ENCODE measurements at regions of chr14 and their contacts with region 1.

Region 1: DNA sequence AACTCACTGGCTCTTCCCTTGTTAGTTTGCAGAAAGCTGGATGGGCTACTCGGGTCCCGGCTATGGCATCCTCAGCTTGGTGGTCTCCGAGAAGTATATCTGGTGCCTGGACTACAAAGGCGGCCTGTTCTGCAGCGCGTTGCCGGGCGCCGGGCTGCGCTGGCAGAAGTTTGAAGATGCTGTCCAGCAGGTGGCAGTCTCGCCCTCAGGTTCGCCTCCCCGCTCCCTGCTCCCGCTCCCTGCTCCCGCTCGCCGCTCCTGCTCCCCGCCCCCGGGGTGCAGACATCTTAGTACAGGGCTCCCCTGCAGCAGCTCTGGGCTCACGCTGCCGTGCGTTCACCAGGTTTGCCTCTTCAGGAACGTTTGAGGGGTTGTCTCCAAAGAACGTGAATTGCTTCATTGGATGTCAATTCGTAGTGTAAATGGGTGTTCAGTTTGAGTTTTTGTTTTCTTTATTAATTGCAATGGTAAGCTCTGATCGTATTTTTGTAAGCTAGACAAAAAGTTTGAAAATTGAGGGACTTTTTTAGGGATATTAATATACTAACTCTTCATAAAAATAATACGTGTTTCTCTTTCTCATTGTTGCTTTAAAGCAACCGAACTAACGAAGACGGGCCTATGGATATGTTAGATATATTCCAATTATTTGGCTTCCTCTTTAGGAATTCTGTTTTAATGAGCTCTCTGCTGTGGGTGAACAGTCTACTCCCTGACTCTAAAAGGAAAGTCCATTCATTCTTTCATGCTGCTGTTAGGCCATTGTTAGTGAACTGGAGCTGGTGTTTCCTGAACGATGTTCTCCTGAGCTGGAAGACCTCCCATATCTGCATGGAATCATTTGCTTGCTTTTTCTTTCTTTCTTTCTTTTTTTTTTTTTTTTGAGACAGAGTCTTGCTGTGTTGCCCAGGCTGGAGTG is 71.3 kb downstream of the ANKRD9 start:
- H3K4me3 Mint-ChIP-seq: peak overlapping the region; percentile 39
- H3K27ac Mint-ChIP-seq: no peak overlapping the region
- H3K4me1 Mint-ChIP-seq: peaks cover 6% of the 10 kb centered on the region
- H3K27me3 Mint-ChIP-seq: no peaks in the 10 kb centered on the region

Region 2: GRCh38 chr14:102516531-102517415 is 78.5 kb after region 1 on chr14:
- intact Hi-C with region 1: loop called (anchors 1 kb)
- H3K4me3 Mint-ChIP-seq: peak overlapping the region; percentile 84
- H3K27ac Mint-ChIP-seq: peak overlapping the region; percentile 89
- H3K4me1 Mint-ChIP-seq: peaks cover 10% of the 10 kb centered on the region
- H3K27me3 Mint-ChIP-seq: peaks cover 31% of the 10 kb centered on the region

Measured in dendritic cell treated with granulocyte-macrophage colony-stimulating factor and Interleukin-4, amounts not matched to agents 40 ng/mL and 50 ng/mL, for 4 days (primary cell).